HepG2 (cell line): ENCODE measurements at regions of chr2 and their contacts with region 1.

Region 1: DNA sequence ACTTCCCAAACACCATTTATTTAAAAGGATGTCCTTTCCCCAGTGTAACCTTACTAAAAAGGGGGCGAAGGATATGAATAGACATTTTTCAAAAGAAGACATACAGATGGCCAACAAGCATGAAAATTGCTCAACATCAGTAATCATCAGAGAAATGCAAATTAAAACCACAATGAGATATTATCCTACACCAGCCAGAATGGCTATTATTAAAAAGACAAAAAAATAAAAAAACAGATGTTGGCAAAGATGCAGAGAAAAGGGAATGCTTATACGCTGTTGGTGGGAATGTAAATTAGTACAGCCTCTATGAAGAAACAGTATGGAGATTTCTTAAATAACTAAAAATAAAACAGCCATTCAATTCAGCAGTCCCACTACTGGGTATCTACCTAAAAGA is 142.3 kb upstream of the NT5C1B start:
- DNase-seq: no peak
- ATAC-seq: no peak
- H3K4me3 ChIP-seq: no peak overlapping the region
- H3K27ac ChIP-seq: no peak overlapping the region
- H3K4me1 ChIP-seq: no peaks in the 10 kb centered on the region
- H3K27me3 ChIP-seq: no peaks in the 10 kb centered on the region
- CTCF ChIP-seq: no peak
- EP300 ChIP-seq: no peak
- POLR2A ChIP-seq: no peak
- RAD21 ChIP-seq: no peak

Region 2: DNA sequence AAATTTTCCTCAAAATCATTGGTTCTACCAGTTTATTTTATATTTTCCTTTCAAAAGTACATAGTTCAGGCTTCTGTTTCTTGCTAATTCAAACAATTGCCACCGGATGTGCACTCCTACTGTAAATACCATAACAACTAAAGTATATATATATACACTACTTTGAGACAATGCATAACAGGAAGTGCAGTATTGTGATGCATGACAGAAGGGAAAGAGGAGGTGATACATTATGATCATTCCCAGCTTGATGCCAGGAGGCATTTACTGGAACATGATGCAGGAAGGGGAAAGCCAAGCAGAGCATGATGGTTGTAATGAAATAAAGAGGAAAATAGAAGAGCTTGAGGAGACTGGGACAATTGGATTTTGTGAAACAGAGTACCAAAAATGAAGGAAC is 72.9 kb after region 1 on chr2:
- CTCF ChIA-PET with region 1: no interaction called
- POLR2A ChIA-PET with region 1: no interaction called
- in situ Hi-C with region 1: no loop called
- intact Hi-C with region 1: loop called (anchors 2 kb)
- DNase-seq: no peak
- ATAC-seq: no peak
- H3K4me3 ChIP-seq: no peak overlapping the region
- H3K27ac ChIP-seq: no peak overlapping the region
- H3K4me1 ChIP-seq: peaks cover 19% of the 10 kb centered on the region
- H3K27me3 ChIP-seq: 0 out of 5 replicates have a peak, but pooled peaks cover 0 to under 1% of the 10 kb centered on the region in 2 experiments
- CTCF ChIP-seq: no peak
- EP300 ChIP-seq: no peak
- POLR2A ChIP-seq: no peak
- RAD21 ChIP-seq: no peak

Region 3: GRCh38 chr2:18976168-18976961 is 244.7 kb after region 1 on chr2:
- CTCF ChIA-PET with region 1: no interaction called
- POLR2A ChIA-PET with region 1: no interaction called
- in situ Hi-C with region 1: no loop called
- intact Hi-C with region 1: no loop called
- DNase-seq: no peak
- ATAC-seq: no peak
- H3K4me3 ChIP-seq: no peak overlapping the region
- H3K27ac ChIP-seq: no peak overlapping the region
- H3K4me1 ChIP-seq: peaks cover 5% of the 10 kb centered on the region
- H3K27me3 ChIP-seq: no peaks in the 10 kb centered on the region
- CTCF ChIP-seq: no peak
- EP300 ChIP-seq: no peak
- POLR2A ChIP-seq: no peak
- RAD21 ChIP-seq: no peak